ENCODE measurements at regions of chr16 and their contacts with region 1.

Region 1: DNA sequence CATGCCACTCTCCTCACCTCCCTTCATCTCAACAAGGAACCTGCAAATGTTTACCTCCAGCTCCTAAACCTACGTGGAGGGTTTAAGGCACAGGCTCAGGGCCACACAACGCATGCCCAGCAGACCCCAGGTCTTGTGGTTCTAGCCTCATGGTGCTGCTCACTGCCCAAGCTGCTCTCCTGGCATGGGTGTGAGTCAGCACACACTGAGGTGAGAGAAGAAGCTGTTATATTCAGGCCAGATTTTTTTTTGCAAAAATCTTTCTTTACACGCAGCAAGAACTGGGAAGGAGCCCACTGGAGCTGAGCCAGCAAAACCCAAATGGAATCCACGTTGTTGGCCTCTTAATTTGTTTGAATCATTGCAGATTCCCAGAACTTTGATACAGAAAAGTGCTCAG is 5.5 kb upstream of the C16orf96 start:
- DNase-seq: no peak
- H3K4me3 Mint-ChIP-seq: no peak overlapping the region
- H3K27ac Mint-ChIP-seq: no peak overlapping the region
- H3K4me1 Mint-ChIP-seq: peaks cover 5% of the 10 kb centered on the region
- H3K27me3 Mint-ChIP-seq: peaks cover 27% of the 10 kb centered on the region
- CTCF ChIP-seq: no peak

Region 2: DNA sequence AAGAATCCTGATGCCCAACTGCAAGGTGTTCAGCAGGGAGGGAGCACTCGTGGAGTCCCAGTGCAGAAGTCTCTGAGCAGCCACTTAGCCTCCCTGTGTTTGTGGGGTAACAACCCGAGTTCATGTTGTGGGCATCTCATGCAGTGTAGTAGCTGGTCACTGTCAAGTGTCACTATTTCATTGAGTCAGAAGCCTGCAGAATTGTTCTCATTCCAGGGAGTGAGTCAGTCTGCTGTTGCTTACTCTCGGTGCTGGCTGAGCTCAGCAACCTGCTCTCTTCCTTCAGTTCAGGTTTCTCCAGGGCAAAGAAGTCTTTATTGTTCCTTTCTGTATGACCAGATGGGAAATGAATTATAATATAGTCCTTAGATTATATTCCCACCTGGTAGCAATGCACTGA is 50.3 kb before region 1 on chr16:
- CTCF ChIA-PET with region 1: interaction called, 100 read pairs
- POLR2A ChIA-PET with region 1: interaction called, 3 read pairs
- intact Hi-C with region 1: no loop called
- DNase-seq: peak; percentile 66
- H3K4me3 Mint-ChIP-seq: no peak overlapping the region
- H3K27ac Mint-ChIP-seq: no peak overlapping the region
- H3K4me1 Mint-ChIP-seq: peaks cover 44% of the 10 kb centered on the region
- H3K27me3 Mint-ChIP-seq: no peaks in the 10 kb centered on the region
- CTCF ChIP-seq: no peak

Region 3: DNA sequence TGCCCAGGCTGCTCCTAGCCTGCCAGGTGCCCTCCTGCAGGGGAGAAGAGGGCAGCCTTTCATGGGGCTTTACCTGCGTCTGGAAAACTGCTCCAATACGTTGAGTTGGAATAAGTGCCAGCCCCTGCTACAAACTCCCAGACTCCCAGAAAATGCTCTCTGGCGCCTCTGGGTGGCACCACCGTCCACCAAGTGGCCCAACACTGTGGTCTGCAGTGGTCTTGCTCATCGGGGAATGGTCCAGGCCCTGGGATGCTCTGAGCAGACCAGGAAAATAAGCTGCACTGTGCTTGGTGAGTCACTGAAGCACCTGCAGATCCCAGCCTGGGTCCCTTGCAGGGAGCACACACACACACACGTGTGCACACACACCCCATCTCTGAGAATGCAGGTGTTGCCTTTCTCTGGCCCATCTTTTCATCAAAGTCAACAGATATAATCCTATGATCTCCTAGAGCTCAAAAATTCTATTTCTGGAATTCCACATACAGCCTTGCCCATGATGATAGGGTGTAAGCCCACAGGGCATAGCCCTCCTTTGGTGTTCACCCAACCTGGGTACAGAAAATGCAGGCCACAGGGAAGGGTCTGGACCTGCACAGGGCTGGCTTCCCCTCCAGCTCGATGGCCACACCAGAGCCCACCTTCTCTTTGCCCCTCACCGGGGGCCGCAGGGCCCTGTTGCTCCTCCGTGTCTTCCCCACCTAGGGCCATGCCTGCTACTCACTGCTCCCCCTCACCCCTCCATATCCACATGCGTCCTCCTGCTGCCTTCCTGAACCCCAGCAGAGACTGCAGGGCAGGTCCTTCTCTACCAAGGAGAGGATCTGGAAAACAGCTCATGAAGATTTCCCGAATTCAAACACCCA is 32.5 kb before region 1 on chr16:
- CTCF ChIA-PET with region 1: interaction called, 10 read pairs
- POLR2A ChIA-PET with region 1: no interaction called
- intact Hi-C with region 1: no loop called
- DNase-seq: peak; percentile 38
- H3K4me3 Mint-ChIP-seq: no peak overlapping the region
- H3K27ac Mint-ChIP-seq: no peak overlapping the region
- H3K4me1 Mint-ChIP-seq: no peaks in the 10 kb centered on the region
- H3K27me3 Mint-ChIP-seq: no peaks in the 10 kb centered on the region
- CTCF ChIP-seq: peak; percentile 73

Region 4: DNA sequence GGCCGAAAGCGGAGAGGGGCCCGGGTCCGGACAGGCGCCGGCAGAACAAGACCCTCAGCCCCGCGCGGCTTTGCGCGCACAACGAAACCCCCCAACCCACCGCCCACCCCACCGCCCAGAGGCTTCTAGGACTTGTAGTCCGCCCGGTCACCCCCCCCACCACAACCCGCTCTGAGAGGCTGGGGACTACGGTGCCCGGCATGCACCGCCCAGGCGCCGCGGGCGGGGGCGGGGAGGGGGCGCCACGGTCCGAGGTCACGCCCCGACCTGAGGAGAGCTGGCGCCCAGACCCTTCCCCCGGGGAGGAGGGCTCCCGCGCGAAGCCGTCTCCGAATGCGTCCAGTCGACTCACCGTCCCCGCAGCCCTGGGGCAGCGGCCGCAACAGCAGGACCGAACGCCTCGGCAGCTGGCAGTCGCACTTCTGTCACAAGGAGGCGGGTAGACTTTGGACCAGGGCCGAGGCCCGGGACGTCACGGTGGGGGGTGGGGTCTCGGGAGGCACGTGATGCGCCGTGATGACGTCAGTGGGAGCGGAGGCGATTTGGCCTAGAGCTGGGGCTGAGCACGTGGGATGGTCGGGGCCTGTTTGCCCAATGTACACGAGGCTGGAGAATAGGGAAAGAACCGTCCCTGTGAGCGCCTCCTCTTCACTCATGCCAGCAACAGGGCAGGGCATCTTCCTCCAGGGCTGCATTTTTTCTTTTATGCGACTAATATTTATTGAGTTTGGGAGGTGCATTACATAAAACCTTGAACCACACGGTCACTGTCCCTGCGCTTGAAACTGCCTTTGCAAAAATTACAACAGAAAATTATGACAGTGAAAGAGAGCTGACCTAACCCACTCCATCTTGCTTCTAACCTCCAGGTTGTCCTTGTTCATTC is 12.0 kb before region 1 on chr16 and contains the start of gene CDIP1:
- CTCF ChIA-PET with region 1: interaction called, 23 read pairs
- POLR2A ChIA-PET with region 1: interaction called, 3 read pairs
- intact Hi-C with region 1: no loop called
- DNase-seq: peak; percentile 85
- H3K4me3 Mint-ChIP-seq: peak within 1 kb of the TSS; percentile 65
- H3K27ac Mint-ChIP-seq: peak within 1 kb of the TSS; percentile 49
- H3K4me1 Mint-ChIP-seq: no peaks in the 10 kb centered on the region
- H3K27me3 Mint-ChIP-seq: no peaks in the 10 kb centered on the region
- CTCF ChIP-seq: no peak
- total RNA-seq, gene CDIP1: 6.0 and 8.0 TPM in 2 replicates